ENCODE measurements at regions of chr19 and their contacts with region 1.

Region 1: GRCh38 chr19:47112997-47113849 is at the start of gene ZC3H4:
- DNase-seq: peak; percentile 100
- H3K4me3 ChIP-seq: peak within 1 kb of the TSS; percentile 79 to 94 (median 80)
- H3K27ac ChIP-seq: peak within 1 kb of the TSS; percentile 92
- H3K4me1 ChIP-seq: peaks cover 23% of the 10 kb centered on the region
- H3K27me3 ChIP-seq: no peaks in the 10 kb centered on the region
- CTCF ChIP-seq: no peak
- POLR2A ChIP-seq: peak; percentile 89
- total RNA-seq, gene ZC3H4: 56.4 and 63.9 TPM in 2 replicates

Region 2: GRCh38 chr19:47047763-47048405 is 65.3 kb before region 1 on chr19:
- CTCF ChIA-PET with region 1: interaction called, 3 read pairs
- POLR2A ChIA-PET with region 1: no interaction called
- dilution Hi-C with region 1: no loop called
- intact Hi-C with region 1: loop called (anchors 5 kb)
- DNase-seq: peak; percentile 90
- H3K4me3 ChIP-seq: peak overlapping the region; percentile 37 to 84 (median 62)
- H3K27ac ChIP-seq: no peak overlapping the region
- H3K4me1 ChIP-seq: peaks cover 3% of the 10 kb centered on the region
- H3K27me3 ChIP-seq: no peaks in the 10 kb centered on the region
- CTCF ChIP-seq: no peak
- POLR2A ChIP-seq: no peak

Region 3: GRCh38 chr19:47124937-47125668 is 11.9 kb after region 1 on chr19:
- CTCF ChIA-PET with region 1: interaction called, 13 read pairs
- POLR2A ChIA-PET with region 1: interaction called, 5 read pairs
- dilution Hi-C with region 1: no loop called
- intact Hi-C with region 1: loop called (anchors 2 kb)
- DNase-seq: peak; percentile 74
- H3K4me3 ChIP-seq: no peak overlapping the region
- H3K27ac ChIP-seq: no peak overlapping the region
- H3K4me1 ChIP-seq: no peaks in the 10 kb centered on the region
- H3K27me3 ChIP-seq: no peaks in the 10 kb centered on the region
- CTCF ChIP-seq: peak; percentile 50 to 53
- POLR2A ChIP-seq: no peak

Region 4: DNA sequence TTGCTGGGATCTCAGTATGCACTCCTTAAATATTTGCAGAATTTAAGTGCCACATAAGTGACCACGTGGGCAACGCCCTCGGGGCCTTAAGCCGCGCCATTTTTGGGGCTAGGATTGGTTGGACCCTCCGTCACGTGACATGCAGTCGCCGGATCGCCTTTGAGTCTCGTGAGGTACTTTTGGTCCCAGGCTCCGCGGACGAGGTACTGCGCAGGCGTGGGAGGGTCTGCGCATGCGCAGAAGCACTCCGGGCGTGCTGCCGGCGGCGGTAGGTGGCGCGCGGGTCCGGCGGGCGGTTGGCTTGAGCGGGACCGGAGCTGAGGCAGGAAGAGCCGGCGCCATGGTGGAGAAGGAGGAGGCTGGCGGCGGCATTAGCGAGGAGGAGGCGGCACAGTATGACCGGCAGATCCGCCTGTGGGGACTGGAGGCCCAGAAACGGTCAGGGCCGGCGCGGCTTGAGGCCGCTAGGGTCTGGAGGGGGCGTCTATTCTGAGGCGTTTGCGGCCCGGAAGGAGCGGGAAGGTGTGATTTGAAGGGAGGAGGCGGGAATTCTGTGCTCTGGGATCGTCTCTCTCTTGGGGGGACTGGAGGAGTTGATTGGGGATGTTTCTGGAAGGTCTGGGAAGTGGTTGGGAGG is 17.5 kb after region 1 on chr19 and contains the start of gene SAE1:
- CTCF ChIA-PET with region 1: interaction called, 13 read pairs
- POLR2A ChIA-PET with region 1: interaction called, 9 read pairs
- dilution Hi-C with region 1: no loop called
- intact Hi-C with region 1: loop called (anchors 2 kb)
- DNase-seq: peak; percentile 99
- H3K4me3 ChIP-seq: peak within 1 kb of the TSS; percentile 76 to 93 (median 82)
- H3K27ac ChIP-seq: peak within 1 kb of the TSS; percentile 78
- H3K4me1 ChIP-seq: peaks cover 30% of the 10 kb centered on the region
- H3K27me3 ChIP-seq: no peaks in the 10 kb centered on the region
- CTCF ChIP-seq: peak; percentile 39 to 64
- POLR2A ChIP-seq: peak; percentile 75
- total RNA-seq, gene SAE1: 219 and 223 TPM in 2 replicates

Region 5: GRCh38 chr19:47225746-47226425 is 112.7 kb after region 1 on chr19:
- CTCF ChIA-PET with region 1: no interaction called
- POLR2A ChIA-PET with region 1: interaction called, 12 read pairs
- dilution Hi-C with region 1: no loop called
- intact Hi-C with region 1: no loop called
- DNase-seq: peak; percentile 84
- H3K4me3 ChIP-seq: peak overlapping the region in 1 of 3 experiments; percentile 31
- H3K27ac ChIP-seq: peak overlapping the region; percentile 61
- H3K4me1 ChIP-seq: peaks cover 22% of the 10 kb centered on the region
- H3K27me3 ChIP-seq: no peaks in the 10 kb centered on the region
- CTCF ChIP-seq: peak in 1 of 2 donors; percentile 6
- POLR2A ChIP-seq: peak; percentile 100

Measured in endothelial cell of umbilical vein (primary cell).